ENCODE measurements at regions of chr14 and their contacts with region 1.

Region 1: DNA sequence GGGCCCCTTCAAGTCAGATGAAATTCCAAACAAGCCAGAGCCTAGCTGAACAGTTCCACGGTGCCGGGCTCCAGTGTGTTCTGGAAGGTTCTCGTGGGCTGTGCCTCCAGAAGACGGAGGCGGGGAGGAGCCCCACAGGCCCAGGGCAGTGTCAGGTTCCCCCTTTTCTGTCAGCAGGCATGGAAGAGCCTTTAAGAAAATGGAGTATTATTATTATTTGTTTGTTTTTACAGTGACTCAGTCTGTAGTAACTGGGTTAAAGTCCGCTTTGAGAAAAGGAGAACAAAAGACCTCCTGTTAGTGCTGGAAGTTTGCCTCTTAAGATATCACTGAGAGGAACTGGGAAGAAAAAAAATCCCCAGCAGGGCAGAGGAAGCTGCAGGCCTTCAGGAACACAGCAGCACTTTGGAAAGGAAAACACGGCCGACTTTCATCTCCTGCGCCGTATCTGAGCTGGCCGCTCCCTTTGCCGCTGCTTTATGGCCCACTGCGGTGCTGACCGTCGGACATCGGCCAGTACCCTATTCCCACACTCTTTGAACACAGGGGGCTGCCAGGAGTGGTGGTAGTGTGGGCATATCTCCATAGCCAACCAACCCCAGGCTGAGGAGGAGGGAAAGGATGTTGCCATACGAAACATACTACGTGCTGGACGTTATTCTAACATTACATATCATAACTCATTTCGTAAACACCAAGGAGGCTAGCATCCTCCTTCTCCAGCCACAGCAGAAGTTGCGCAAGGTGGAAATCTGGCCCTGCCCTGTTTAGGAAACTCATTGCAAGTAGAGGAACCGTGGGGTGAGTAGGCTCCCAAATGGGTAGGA is 194.0 kb downstream of the ZFP36L1 start:
- DNase-seq: peak; percentile 91

Region 2: GRCh38 chr14:68633071-68633991 is 34.5 kb after region 1 on chr14:
- intact Hi-C with region 1: loop called (anchors 2 kb)
- DNase-seq: no peak

Region 3: GRCh38 chr14:68780358-68781160 is 181.7 kb after region 1 on chr14:
- intact Hi-C with region 1: no loop called
- DNase-seq: peak; percentile 84